Panc1 (cell line): ENCODE measurements at regions of chr14 and their contacts with region 1.

Region 1: DNA sequence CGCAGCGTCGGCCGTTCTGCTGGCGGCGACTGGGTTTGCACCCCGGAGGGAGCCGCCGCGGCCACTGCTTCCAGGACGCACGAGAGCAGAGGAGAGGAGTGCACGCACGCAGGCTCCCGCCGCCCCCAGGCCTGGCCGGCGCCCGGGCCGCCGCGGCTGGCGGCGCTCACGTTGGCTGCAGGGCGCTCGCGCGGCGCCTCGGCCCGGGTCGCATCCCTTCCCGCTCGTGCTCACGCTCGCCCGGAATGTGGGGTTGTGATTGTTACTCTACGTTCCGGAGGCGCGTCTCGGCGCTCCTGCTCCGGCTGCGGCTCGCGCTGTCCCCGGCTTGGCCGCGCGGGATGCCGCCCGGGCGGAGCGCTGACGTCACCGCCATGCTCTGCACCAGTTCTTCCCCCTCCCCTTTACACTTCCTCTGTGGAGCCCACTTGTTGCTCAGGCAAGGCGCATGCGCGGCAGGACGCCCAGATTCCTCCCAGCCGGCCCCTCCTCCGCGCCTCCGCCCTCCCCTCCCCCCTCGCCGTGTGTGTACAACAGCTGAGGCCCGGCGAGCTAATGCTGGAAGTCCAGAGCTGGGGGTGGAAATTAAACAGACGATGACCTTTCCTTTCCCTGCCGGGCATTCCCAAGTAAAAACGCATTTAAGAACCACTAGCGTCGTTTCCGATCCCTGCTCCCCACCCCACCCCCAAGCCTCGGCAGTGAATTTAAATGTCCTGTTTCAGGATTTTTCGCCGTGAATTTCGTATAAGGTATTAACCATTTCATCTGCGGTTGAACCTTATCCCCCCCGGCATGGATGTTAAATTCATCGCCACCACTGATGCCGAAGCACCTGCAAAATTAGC is at the start of gene IRF2BPL:
- DNase-seq: no peak
- ATAC-seq: peak; percentile 71
- H3K4me3 ChIP-seq: peak within 1 kb of the TSS; percentile 58 to 78
- H3K27ac ChIP-seq: peak within 1 kb of the TSS; percentile 99
- H3K4me1 ChIP-seq: peaks cover 43% of the 10 kb centered on the region
- H3K27me3 ChIP-seq: no peaks in the 10 kb centered on the region
- CTCF ChIP-seq: no peak
- total RNA-seq, gene IRF2BPL: 83.3 TPM

Region 2: DNA sequence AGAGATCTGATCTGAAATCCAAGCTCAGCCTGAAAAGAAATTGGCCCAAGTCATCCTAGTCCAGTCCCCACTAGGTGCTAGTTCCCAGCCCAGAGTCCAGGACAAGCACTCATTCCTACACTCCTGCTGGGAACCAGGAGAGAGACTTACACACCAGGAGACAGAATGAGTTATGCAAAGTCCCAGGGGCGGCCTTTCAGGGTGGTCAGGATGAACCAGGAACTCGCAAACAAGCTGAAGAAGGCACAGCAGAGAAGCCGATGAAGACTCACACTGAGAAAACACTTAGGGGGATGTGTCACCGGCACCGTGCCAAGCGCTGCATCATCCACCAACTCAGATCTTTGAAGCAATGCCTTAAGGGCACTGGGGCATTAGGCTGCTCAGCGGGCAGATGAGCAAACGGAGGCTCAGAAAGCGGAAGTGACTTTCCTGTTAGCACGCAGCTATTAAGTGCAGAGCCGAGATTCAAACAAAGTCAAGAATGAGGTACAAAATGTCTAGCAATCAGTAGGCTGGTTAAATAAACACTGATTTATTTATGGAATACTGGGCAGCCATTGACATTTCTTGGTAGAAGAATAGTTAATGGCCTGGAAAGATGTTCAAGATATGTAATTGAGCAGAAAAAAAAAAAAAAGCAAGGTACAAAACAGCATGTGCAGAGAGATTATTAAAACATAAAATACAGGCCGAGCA is 123.7 kb before region 1 on chr14:
- CTCF ChIA-PET with region 1: no interaction called
- POLR2A ChIA-PET with region 1: interaction called, 19 read pairs
- in situ Hi-C with region 1: no loop called
- intact Hi-C with region 1: no loop called
- DNase-seq: peak; percentile 91
- ATAC-seq: peak; percentile 91
- H3K4me3 ChIP-seq: peak overlapping the region in 1 of 2 experiments; percentile 15; a peak in 2 of 4 replicates
- H3K27ac ChIP-seq: peak overlapping the region; percentile 66
- H3K4me1 ChIP-seq: peaks cover 15% of the 10 kb centered on the region
- H3K27me3 ChIP-seq: no peaks in the 10 kb centered on the region
- CTCF ChIP-seq: no peak

Region 3: GRCh38 chr14:76995279-76996005 is 33.2 kb before region 1 on chr14:
- CTCF ChIA-PET with region 1: no interaction called
- POLR2A ChIA-PET with region 1: no interaction called
- in situ Hi-C with region 1: no loop called
- intact Hi-C with region 1: no loop called
- DNase-seq: no peak
- ATAC-seq: no peak
- H3K4me3 ChIP-seq: no peak overlapping the region
- H3K27ac ChIP-seq: no peak overlapping the region
- H3K4me1 ChIP-seq: no peaks in the 10 kb centered on the region
- H3K27me3 ChIP-seq: no peaks in the 10 kb centered on the region
- CTCF ChIP-seq: no peak

Region 4: GRCh38 chr14:77040741-77041653 is 12.4 kb after region 1 on chr14:
- CTCF ChIA-PET with region 1: interaction called, 8 read pairs
- POLR2A ChIA-PET with region 1: interaction called, 18 read pairs
- in situ Hi-C with region 1: no loop called
- intact Hi-C with region 1: no loop called
- DNase-seq: no peak
- ATAC-seq: peak; percentile 52; the same call in 1 of the 2 replicates
- H3K4me3 ChIP-seq: peak overlapping the region in 1 of 2 experiments; percentile 37; a peak in 3 of 4 replicates
- H3K27ac ChIP-seq: peak overlapping the region; percentile 99
- H3K4me1 ChIP-seq: peaks cover 94% of the 10 kb centered on the region
- H3K27me3 ChIP-seq: no peaks in the 10 kb centered on the region
- CTCF ChIP-seq: no peak

Region 5: GRCh38 chr14:77097700-77098528 is 69.3 kb after region 1 on chr14 and contains the start of gene CIPC:
- CTCF ChIA-PET with region 1: no interaction called
- POLR2A ChIA-PET with region 1: interaction called, 11 read pairs
- in situ Hi-C with region 1: no loop called
- intact Hi-C with region 1: no loop called
- DNase-seq: peak; percentile 78
- ATAC-seq: peak; percentile 94
- H3K4me3 ChIP-seq: peak within 1 kb of the TSS; percentile 87 to 97
- H3K27ac ChIP-seq: peak within 1 kb of the TSS; percentile 98
- H3K4me1 ChIP-seq: peaks cover 17% of the 10 kb centered on the region
- H3K27me3 ChIP-seq: no peaks in the 10 kb centered on the region
- CTCF ChIP-seq: no peak
- total RNA-seq, gene CIPC: 20.3 TPM